Aorta (tissue), 5 donors: ENCODE measurements at regions of chr9 and their contacts with region 1.

Region 1: DNA sequence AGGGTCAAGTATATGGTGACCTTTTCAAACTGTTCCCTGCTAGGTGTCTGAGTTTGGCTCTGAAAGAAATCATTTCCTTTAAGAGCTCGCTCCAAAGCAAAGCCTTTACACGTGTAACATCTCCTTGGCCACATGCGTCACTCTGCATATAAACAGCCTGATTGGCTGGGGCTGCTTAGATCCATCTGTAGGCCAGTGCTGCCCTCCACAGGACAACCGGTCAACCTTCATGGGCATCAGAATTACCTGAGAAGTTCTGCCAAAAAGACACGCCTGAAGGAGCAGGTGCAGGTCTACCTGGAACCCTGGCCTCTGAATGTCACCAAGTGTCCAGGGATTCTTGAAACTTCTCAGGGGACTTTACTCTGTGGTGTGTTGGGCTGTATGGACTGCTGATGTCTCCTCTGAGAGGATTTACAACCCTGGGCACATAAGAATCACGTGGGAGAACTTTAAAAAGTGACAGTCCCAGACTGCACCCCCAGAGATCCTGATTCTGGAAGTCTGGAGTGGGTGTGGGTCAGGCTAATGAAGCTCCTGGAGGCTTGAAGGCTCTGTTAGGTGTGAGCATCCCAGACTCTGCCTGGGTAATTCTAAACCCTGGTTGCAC is 497.6 kb downstream of the GADD45G start:
- DNase-seq: peak; percentile 87 to 89
- ATAC-seq: peak; percentile 89
- H3K4me3 ChIP-seq: no peak overlapping the region
- H3K27ac ChIP-seq: no peak overlapping the region
- H3K4me1 ChIP-seq: no peaks in the 10 kb centered on the region
- H3K27me3 ChIP-seq: no peaks in the 10 kb centered on the region

Region 2: GRCh38 chr9:89597711-89598625 is 504.4 kb before region 1 on chr9:
- intact Hi-C with region 1: loop called (anchors 1 to 2 kb)
- DNase-seq: no peak
- ATAC-seq: peak; percentile 68
- H3K4me3 ChIP-seq: no peak overlapping the region
- H3K27ac ChIP-seq: no peak overlapping the region
- H3K4me1 ChIP-seq: no peaks in the 10 kb centered on the region
- H3K27me3 ChIP-seq: no peaks in the 10 kb centered on the region

Region 3: GRCh38 chr9:89732295-89732938 is 370.0 kb before region 1 on chr9:
- intact Hi-C with region 1: loop called in 1 of 2 experiments (anchors 10 kb)
- DNase-seq: no peak
- ATAC-seq: no peak
- H3K4me3 ChIP-seq: no peak overlapping the region
- H3K27ac ChIP-seq: no peak overlapping the region
- H3K4me1 ChIP-seq: no peaks in the 10 kb centered on the region
- H3K27me3 ChIP-seq: no peaks in the 10 kb centered on the region

Region 4: DNA sequence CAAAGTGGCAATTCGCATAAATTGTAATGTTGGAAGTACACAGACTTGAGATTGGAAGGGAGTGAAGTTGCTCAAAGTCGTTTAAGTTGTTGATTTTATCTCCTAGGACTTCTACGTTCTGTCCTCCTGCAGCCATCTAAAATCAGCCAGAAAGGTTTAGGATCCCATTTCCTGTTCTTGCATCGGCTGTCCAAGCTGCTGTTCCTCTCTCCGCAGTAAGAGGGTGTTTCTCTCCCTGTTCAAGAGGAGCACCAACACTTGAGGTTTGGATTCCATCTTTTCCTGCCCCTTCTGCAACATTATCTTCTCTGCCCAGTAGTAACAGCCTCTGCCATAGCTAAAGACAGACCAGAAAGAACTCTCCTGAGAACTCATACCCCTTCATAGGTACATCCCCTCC is 124.2 kb before region 1 on chr9:
- intact Hi-C with region 1: loop called in 1 of 2 experiments (anchors 10 kb)
- DNase-seq: no peak
- ATAC-seq: peak; percentile 33
- H3K4me3 ChIP-seq: no peak overlapping the region
- H3K27ac ChIP-seq: no peak overlapping the region
- H3K4me1 ChIP-seq: no peaks in the 10 kb centered on the region
- H3K27me3 ChIP-seq: no peaks in the 10 kb centered on the region

Region 5: GRCh38 chr9:90301277-90301653 is 198.9 kb after region 1 on chr9:
- intact Hi-C with region 1: no loop called
- DNase-seq: no peak
- ATAC-seq: no peak
- H3K4me3 ChIP-seq: no peak overlapping the region
- H3K27ac ChIP-seq: no peak overlapping the region
- H3K4me1 ChIP-seq: no peaks in the 10 kb centered on the region
- H3K27me3 ChIP-seq: no peaks in the 10 kb centered on the region

Region 6: DNA sequence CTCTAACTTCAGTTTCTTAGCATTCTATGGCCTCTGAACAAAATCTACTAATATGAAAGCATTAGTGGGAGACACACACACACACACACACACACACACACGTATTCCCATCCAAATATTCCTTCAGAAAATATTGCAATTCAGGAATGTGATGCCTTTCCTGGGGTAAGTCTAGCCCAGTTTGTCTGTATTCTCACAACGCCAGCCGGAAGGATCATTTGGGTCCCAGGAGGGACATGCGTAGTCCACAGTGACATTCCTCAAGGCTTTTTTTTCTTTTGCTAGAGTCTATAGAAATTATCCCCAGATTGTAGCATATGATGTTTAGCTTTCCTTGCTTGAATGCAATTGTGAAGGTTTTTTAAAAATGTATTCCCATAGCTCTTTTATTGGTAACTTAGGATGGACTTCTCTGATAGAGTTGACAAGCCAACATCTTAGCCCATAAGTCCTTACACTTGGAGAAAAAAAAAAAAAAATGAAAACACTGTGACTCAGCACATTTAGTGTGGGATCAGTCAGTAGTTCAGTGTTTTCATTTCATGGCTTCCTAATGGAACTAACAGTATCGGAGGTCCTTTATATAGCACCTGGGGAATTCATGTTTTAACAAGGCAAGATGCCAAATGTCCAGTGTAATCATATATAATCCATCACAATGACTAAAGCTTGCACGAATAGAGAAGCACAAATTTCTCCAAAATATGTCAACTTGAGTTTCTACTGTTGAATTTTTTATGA is 223.7 kb after region 1 on chr9:
- intact Hi-C with region 1: no loop called
- DNase-seq: no peak
- ATAC-seq: no peak
- H3K4me3 ChIP-seq: no peak overlapping the region
- H3K27ac ChIP-seq: no peak overlapping the region
- H3K4me1 ChIP-seq: no peaks in the 10 kb centered on the region
- H3K27me3 ChIP-seq: peaks cover 0 to 3% of the 10 kb centered on the region in 2 donors